ENCODE measurements at regions of chrX and their contacts with region 1.

Region 1: GRCh38 chrX:20442597-20442996 is 175.9 kb upstream of the RPS6KA3 start:
- DNase-seq: peak; percentile 76 to 78
- H3K4me3 ChIP-seq: no peak overlapping the region
- H3K4me3 Mint-ChIP-seq: no peak overlapping the region
- H3K27ac Mint-ChIP-seq: no peak overlapping the region
- H3K4me1 ChIP-seq: peaks cover 12% of the 10 kb centered on the region
- H3K4me1 Mint-ChIP-seq: peaks cover 7% of the 10 kb centered on the region
- H3K27me3 ChIP-seq: no peaks in the 10 kb centered on the region
- H3K27me3 Mint-ChIP-seq: no peaks in the 10 kb centered on the region
- CTCF ChIP-seq: peak; percentile 50 to 59

Region 2: GRCh38 chrX:20252381-20253231 is 190.0 kb before region 1 on chrX:
- CTCF ChIA-PET with region 1: no interaction called
- POLR2A ChIA-PET with region 1: no interaction called
- intact Hi-C with region 1: loop called (anchors 1 kb)
- DNase-seq: peak; percentile 43 to 76
- H3K4me3 ChIP-seq: no peak overlapping the region
- H3K4me3 Mint-ChIP-seq: no peak overlapping the region
- H3K27ac Mint-ChIP-seq: peak overlapping the region; percentile 66
- H3K4me1 ChIP-seq: 0 out of 2 replicates have a peak, but pooled peaks cover 5% of the 10 kb centered on the region
- H3K4me1 Mint-ChIP-seq: no peaks in the 10 kb centered on the region
- H3K27me3 ChIP-seq: no peaks in the 10 kb centered on the region
- H3K27me3 Mint-ChIP-seq: no peaks in the 10 kb centered on the region
- CTCF ChIP-seq: peak; percentile 44 to 50

Region 3: DNA sequence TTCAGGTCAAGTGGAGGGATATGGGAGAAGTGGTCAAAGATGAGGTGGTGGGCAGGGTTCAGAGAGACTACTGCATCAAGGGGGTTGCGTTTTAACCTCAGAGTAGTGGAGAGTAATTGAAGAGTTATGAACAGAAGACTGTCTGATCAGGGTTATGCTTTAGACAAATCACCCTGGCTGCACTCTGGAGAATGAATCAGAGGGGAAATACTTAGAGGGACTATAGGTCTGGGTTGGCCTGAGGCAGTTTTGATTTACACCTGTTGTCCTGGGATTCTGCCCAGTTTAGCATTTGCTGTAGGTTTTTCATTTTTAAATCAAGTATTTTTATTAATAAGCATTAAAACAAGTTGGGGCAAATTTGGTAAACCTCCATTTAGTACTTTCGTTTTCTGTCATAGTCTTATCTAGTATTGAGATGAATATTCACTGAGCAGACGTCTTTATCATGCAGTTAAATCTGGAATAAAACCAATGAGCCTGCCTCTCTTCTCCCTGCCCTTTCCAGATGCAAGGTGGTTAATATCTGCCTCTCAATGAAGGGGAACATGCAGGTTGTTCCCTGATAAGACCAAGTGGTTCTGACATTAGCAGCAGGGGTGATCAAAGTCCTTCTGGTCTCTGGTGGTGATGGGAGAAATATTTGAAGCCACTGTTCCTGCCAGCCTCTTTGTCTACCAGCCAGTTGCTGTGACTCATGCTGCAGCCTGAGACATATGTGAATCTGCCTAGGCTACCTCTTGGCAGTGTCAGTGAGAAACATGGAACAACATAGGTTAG is 59.9 kb before region 1 on chrX:
- CTCF ChIA-PET with region 1: no interaction called
- POLR2A ChIA-PET with region 1: no interaction called
- intact Hi-C with region 1: loop called (anchors 1 kb)
- DNase-seq: peak in 1 of 2 experiments; percentile 52
- H3K4me3 ChIP-seq: no peak overlapping the region
- H3K4me3 Mint-ChIP-seq: no peak overlapping the region
- H3K27ac Mint-ChIP-seq: no peak overlapping the region
- H3K4me1 ChIP-seq: peaks cover 31% of the 10 kb centered on the region
- H3K4me1 Mint-ChIP-seq: peaks cover 27% of the 10 kb centered on the region
- H3K27me3 ChIP-seq: no peaks in the 10 kb centered on the region
- H3K27me3 Mint-ChIP-seq: no peaks in the 10 kb centered on the region
- CTCF ChIP-seq: no peak

Region 4: GRCh38 chrX:20477836-20478524 is 35.4 kb after region 1 on chrX:
- CTCF ChIA-PET with region 1: no interaction called
- POLR2A ChIA-PET with region 1: no interaction called
- intact Hi-C with region 1: loop called (anchors 5 kb)
- DNase-seq: peak; percentile 26 to 44
- H3K4me3 ChIP-seq: no peak overlapping the region
- H3K4me3 Mint-ChIP-seq: no peak overlapping the region
- H3K27ac Mint-ChIP-seq: peak overlapping the region; percentile 81
- H3K4me1 ChIP-seq: peaks cover 55% of the 10 kb centered on the region
- H3K4me1 Mint-ChIP-seq: peaks cover 23% of the 10 kb centered on the region
- H3K27me3 ChIP-seq: no peaks in the 10 kb centered on the region
- H3K27me3 Mint-ChIP-seq: no peaks in the 10 kb centered on the region
- CTCF ChIP-seq: no peak

Region 5: GRCh38 chrX:20545538-20545937 is 102.9 kb after region 1 on chrX:
- CTCF ChIA-PET with region 1: no interaction called
- POLR2A ChIA-PET with region 1: no interaction called
- intact Hi-C with region 1: no loop called
- DNase-seq: no peak
- H3K4me3 ChIP-seq: no peak overlapping the region
- H3K4me3 Mint-ChIP-seq: no peak overlapping the region
- H3K27ac Mint-ChIP-seq: no peak overlapping the region
- H3K4me1 ChIP-seq: no peaks in the 10 kb centered on the region; the same call in 1 of the 2 replicates
- H3K4me1 Mint-ChIP-seq: no peaks in the 10 kb centered on the region
- H3K27me3 ChIP-seq: no peaks in the 10 kb centered on the region
- H3K27me3 Mint-ChIP-seq: no peaks in the 10 kb centered on the region
- CTCF ChIP-seq: no peak

Region 6: GRCh38 chrX:20594985-20595384 is 152.4 kb after region 1 on chrX:
- CTCF ChIA-PET with region 1: no interaction called
- POLR2A ChIA-PET with region 1: no interaction called
- intact Hi-C with region 1: no loop called
- DNase-seq: no peak
- H3K4me3 ChIP-seq: no peak overlapping the region
- H3K4me3 Mint-ChIP-seq: no peak overlapping the region
- H3K27ac Mint-ChIP-seq: no peak overlapping the region
- H3K4me1 ChIP-seq: peaks cover 20% of the 10 kb centered on the region
- H3K4me1 Mint-ChIP-seq: peaks cover 6% of the 10 kb centered on the region
- H3K27me3 ChIP-seq: no peaks in the 10 kb centered on the region
- H3K27me3 Mint-ChIP-seq: no peaks in the 10 kb centered on the region
- CTCF ChIP-seq: peak in 1 of 2 experiments; percentile 8